ENCODE measurements at regions of chr4 and their contacts with region 1.

Region 1: GRCh38 chr4:146095091-146095690 is 80.3 kb upstream of the LSM6 start:
- DNase-seq: peak in 2 of 4 donors; percentile 3 to 32
- ATAC-seq: peak; percentile 57
- H3K4me3 ChIP-seq: no peak overlapping the region
- H3K27ac ChIP-seq: no peak overlapping the region
- H3K4me1 ChIP-seq: no peaks in the 10 kb centered on the region
- H3K27me3 ChIP-seq: no peaks in the 10 kb centered on the region
- CTCF ChIP-seq: peak; percentile 71 to 77

Region 2: DNA sequence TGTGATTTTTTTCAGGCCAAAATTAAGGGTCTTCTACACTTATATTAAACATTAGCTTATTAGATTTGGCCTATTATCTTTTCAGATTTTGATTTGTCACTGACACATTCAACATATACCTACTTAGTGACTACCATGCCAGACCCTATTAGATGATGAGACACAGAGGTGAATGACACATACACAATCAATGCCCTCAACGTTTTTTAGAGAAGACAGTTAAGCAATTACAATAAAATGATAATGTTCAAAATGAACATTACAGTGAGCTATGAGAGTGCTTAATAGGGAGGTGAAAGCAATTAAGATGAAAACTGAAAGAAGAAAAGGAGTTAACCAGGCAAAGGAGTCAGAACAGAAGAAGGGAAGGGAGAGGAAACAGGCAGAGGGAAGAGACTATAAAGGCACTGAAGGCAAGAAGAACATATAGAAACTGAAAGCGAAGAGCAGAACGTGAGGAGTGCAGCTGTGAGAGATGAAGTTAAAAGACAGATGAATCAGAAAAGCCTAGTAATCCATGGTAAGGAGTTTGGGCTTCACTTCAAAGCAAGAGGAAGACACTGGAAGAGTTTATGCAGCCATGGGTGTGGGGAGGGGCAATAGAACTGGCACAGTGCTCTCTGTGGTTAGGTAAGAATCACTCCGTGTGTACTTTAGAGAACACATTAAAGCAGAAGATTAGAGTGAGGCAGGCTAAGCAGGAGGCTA is 238.2 kb after region 1 on chr4:
- intact Hi-C with region 1: loop called in 1 of 2 experiments (anchors 10 kb)
- DNase-seq: no peak
- ATAC-seq: peak; percentile 76
- H3K4me3 ChIP-seq: no peak overlapping the region
- H3K27ac ChIP-seq: no peak overlapping the region
- H3K4me1 ChIP-seq: peaks cover 11 to 26% of the 10 kb centered on the region in 2 donors
- H3K27me3 ChIP-seq: no peaks in the 10 kb centered on the region
- CTCF ChIP-seq: no peak

Region 3: GRCh38 chr4:146389561-146389960 is 294.4 kb after region 1 on chr4:
- intact Hi-C with region 1: no loop called
- DNase-seq: no peak
- ATAC-seq: no peak
- H3K4me3 ChIP-seq: no peak overlapping the region
- H3K27ac ChIP-seq: no peak overlapping the region
- H3K4me1 ChIP-seq: no peaks in the 10 kb centered on the region
- H3K27me3 ChIP-seq: no peaks in the 10 kb centered on the region
- CTCF ChIP-seq: no peak